ENCODE measurements at regions of chr18 and their contacts with region 1.

Region 1: GRCh38 chr18:47550611-47551010 is 299.2 kb upstream of the SKOR2 start:
- DNase-seq: no peak
- H3K4me3 ChIP-seq: no peak overlapping the region
- CTCF ChIP-seq: no peak

Region 2: DNA sequence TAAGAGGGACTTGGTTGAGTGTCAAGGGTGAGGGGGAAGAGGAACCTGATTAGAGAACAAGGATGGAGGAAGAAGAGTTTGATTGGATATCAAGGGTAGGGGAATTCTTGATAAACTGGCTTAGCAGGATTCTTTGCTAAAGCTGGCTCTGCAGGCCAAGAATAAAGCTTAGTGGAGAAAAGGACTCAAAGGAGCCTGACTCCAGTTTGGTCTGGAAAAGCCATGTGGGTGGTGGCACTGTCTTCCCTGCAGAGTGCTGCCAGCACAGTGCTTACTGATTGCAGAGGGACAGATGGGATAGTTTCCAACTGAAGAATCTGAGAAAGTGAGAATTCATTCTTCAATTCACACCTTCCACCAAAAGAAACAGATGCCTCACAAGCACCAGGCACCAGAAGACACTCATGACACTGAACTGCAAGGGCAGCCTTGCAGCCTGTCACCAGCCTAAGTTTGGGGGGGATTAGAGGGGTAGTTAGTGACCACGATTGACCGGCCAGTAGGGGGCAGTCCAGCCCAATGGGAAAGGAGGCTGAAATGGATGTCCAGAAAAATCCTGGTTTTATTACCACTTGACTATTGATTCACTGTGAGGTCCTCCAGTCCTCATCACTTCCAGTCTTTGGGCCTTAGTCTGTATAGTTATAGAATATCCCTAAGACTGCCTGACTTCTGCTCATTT is 45.3 kb after region 1 on chr18:
- in situ Hi-C with region 1: loop called (anchors 5 kb)
- DNase-seq: no peak
- H3K4me3 ChIP-seq: no peak overlapping the region
- CTCF ChIP-seq: no peak